ENCODE measurements at regions of chr9 and their contacts with region 1.

Region 1: DNA sequence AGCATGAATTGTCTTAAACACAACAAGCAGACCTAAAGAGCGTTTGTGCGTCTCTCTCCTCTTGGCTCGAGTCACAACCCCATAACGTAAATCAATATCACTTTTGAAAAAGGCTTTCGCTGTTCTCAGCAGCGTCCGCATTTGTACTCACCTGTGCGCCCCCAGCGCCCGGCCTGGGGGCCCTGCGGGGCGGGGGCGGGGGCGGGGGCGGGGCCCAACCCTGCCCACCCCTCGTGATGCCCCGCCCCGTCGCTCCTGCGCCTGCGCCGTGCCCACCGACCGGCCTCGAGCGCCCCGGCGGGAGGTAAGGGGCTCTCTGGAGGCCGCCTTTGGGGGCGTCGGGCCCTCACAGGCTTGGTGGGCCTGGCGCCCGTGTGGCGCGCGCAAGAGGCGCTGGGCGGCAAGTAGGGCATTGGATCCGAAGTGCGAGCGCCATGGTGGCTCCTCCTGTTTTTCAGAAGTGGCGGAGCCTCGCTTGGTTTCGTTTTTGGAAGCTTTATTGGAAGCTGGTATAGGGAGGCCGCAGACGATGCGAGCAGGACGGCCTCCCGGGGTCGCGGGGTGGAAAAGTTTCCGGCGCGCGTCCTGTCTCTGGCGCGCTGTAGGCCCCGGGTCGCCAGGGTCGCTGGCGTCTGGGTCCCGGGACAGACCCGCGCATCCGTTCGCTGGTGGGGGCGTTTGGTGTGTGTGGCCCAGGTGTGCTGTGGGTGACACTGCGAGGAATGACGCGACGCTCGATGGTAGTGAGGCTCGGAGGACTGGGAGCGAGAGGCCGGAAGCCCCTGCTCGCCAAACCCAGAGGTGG is at the start of gene STX17:
- DNase-seq: peak; percentile 21 to 80
- H3K4me3 ChIP-seq: peak within 1 kb of the TSS; percentile 74 to 99
- H3K27ac ChIP-seq: peak within 1 kb of the TSS; percentile 91 to 97
- H3K4me1 ChIP-seq: no peaks in the 10 kb centered on the region
- H3K27me3 ChIP-seq: no peaks in the 10 kb centered on the region
- CTCF ChIP-seq: peak in 2 of 3 experiments; percentile 3 to 6
- total RNA-seq, gene STX17: 24.9 TPM

Region 2: DNA sequence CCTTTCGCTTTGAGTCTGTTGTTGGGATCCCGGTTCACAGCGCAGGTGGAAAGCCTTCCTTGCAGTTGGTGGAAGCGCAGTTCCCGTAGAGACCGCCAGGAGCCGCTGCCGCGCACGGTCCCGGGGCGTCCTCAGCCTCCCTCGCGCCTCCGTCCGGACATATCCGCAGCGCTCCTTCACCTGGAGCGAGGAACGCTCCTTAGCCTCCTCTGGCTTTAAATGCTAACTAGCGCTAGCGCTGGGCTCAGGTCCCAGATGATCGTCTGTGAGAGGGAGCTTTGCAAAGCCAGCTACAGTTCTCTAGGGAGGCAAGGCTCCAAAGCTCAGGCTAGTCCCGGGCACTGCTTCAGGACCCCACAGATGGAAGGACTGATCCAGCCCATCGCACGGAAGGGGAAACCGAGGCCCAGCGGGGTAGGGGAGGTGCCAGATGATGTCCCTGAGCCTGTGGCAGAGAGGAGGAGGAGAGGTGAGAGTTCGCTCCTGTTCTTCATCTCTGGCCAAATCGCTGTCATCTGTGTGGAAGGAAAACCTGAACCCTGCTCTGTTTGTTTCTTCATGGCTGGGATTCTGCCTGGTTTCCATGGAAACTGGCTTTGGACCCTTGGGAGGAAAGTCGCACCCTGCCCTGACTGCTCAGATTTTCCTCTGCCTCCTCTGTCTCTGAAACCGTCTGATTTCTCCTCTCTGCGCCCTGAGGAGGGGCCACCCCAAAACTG is 931.5 kb before region 1 on chr9:
- intact Hi-C with region 1: loop called (anchors 10 kb)
- DNase-seq: peak in 1 of 2 donors; percentile 92
- H3K4me3 ChIP-seq: peak overlapping the region; percentile 39 to 56
- H3K27ac ChIP-seq: peak overlapping the region; percentile 40 to 47
- H3K4me1 ChIP-seq: peaks cover 0 to 29% of the 10 kb centered on the region in 2 donors
- H3K27me3 ChIP-seq: no peaks in the 10 kb centered on the region
- CTCF ChIP-seq: peak; percentile 94 to 100 (median 99)

Region 3: DNA sequence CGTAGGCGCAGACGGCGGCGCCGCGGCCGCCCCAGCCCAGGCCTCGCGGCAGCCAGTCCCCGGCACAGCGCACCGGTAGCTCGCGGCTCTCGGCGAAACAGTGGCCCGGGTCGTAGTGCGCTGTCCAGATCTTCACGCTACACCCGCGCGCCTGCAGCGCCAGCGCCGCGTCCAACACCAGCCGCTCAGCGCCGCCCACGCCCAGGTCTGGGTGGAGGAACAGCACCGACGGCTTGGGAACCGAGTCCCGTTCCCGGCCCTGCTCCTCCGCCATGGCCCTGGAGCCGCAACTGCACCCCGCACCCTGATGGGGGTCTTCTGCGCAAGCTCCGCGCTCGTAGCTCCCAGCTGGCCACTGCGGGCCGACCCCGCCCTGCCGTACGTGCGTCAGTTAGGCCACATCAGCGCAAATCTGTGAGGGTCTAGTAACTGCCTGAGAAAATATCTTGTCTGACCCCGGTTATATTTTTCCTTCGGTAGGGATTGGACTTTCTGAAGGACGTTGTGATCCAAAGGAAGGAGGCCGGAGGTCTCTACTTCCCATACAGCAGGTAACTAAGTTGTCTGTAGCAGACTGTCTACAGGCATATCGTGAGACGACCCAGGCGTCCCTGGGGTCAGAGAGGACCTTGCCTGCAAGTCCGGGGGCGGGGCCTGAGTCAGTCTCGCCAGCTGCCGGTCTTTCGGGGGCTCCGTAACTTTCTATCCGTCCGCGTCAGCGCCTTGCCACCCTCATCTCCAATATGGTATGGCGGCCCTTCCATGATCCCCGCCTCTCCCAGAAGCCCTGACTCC is 684.8 kb before region 1 on chr9 and contains the starts of genes ALG2 and SEC61B:
- intact Hi-C with region 1: loop called (anchors 1 kb)
- DNase-seq: peak; percentile 70 to 96
- H3K4me3 ChIP-seq: peak within 1 kb of the TSS; percentile 94 to 99
- H3K27ac ChIP-seq: peak within 1 kb of the TSS; percentile 88 to 93
- H3K4me1 ChIP-seq: peaks cover 13 to 28% of the 10 kb centered on the region in 2 donors
- H3K27me3 ChIP-seq: no peaks in the 10 kb centered on the region
- CTCF ChIP-seq: peak in 1 of 3 experiments; percentile 13
- total RNA-seq, gene ALG2: 17.1 TPM
- total RNA-seq, gene SEC61B: 88.7 TPM

Region 4: GRCh38 chr9:100098887-100099721 is 192.5 kb after region 1 on chr9 and contains the starts of genes ERP44 and INVS:
- intact Hi-C with region 1: loop called (anchors 5 kb)
- DNase-seq: peak; percentile 98 to 100
- H3K4me3 ChIP-seq: peak within 1 kb of the TSS; percentile 62 to 77
- H3K27ac ChIP-seq: peak within 1 kb of the TSS; percentile 79 to 81
- H3K4me1 ChIP-seq: peaks cover 0 to 16% of the 10 kb centered on the region in 2 donors
- H3K27me3 ChIP-seq: no peaks in the 10 kb centered on the region
- CTCF ChIP-seq: no peak
- total RNA-seq, gene ERP44: 10.7 TPM
- total RNA-seq, gene INVS: 8.5 TPM

Region 5: GRCh38 chr9:100426530-100427428 is 520.2 kb after region 1 on chr9 and contains the start of gene MSANTD3:
- intact Hi-C with region 1: loop called (anchors 5 kb)
- DNase-seq: peak in 1 of 2 donors; percentile 78
- H3K4me3 ChIP-seq: peak within 1 kb of the TSS; percentile 91 to 99
- H3K27ac ChIP-seq: peak within 1 kb of the TSS; percentile 89 to 94
- H3K4me1 ChIP-seq: peaks cover 0 to 26% of the 10 kb centered on the region in 2 donors
- H3K27me3 ChIP-seq: no peaks in the 10 kb centered on the region
- CTCF ChIP-seq: peak in 1 of 3 experiments; percentile 60
- total RNA-seq, gene MSANTD3: 2.8 TPM

Measured in ascending aorta (tissue), 2 donors.